Prostate gland (tissue), 2 donors: ENCODE measurements at regions of chr12 and their contacts with region 1.

Region 1: DNA sequence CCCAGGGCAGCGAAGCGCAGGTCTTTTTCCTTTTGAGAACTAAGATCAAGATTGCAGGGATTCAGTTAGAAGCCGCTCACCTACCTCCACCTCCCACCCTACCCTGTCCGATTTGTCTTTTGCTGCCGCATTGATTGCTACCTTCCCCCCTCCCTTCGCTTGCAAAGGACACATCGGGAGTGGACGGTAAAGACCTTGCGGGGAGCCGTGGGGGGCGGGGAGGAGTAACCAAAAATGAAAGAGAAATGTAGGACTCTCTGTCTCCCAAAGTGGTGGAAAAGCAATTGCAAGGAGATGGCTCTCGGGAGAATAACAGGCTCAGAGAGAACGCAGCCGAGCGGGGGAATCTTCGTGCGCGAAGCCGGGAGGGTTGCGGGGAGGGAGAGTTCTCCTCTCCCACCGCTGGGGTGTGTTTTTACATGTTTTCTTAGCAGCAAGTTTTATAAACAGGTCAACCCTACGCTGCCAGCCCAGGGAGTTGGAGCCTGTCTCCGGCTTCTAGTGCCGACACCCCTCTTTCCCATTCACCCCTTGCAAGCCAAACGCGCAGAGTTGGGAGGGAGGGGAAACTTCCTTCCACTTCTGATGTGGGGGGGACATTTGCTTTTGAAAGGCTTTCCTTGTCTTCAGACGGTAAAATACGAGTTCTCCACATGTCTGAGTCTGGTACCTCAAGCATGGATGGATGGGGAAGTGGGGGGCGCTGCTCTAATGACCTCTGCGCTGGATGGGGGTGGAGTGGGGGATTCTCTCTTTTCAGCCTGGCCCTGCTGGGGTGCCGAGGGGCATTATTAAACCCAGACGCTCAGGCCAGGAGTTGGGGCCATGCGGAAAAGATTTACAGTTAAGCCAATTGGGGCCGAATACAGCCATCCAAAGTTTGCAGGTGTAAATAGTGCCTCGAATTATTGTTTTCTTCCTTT is 8.8 kb upstream of the TBX3 start:
- DNase-seq: peak; percentile 80
- H3K4me3 ChIP-seq: peak overlapping the region; percentile 45 to 47
- H3K27ac ChIP-seq: peak overlapping the region; percentile 88 to 98
- H3K4me1 ChIP-seq: peaks cover 20% of the 10 kb centered on the region
- H3K27me3 ChIP-seq: no peaks in the 10 kb centered on the region
- CTCF ChIP-seq: peak in 1 of 4 experiments; percentile 64
- POLR2A ChIP-seq: peak; percentile 47

Region 2: DNA sequence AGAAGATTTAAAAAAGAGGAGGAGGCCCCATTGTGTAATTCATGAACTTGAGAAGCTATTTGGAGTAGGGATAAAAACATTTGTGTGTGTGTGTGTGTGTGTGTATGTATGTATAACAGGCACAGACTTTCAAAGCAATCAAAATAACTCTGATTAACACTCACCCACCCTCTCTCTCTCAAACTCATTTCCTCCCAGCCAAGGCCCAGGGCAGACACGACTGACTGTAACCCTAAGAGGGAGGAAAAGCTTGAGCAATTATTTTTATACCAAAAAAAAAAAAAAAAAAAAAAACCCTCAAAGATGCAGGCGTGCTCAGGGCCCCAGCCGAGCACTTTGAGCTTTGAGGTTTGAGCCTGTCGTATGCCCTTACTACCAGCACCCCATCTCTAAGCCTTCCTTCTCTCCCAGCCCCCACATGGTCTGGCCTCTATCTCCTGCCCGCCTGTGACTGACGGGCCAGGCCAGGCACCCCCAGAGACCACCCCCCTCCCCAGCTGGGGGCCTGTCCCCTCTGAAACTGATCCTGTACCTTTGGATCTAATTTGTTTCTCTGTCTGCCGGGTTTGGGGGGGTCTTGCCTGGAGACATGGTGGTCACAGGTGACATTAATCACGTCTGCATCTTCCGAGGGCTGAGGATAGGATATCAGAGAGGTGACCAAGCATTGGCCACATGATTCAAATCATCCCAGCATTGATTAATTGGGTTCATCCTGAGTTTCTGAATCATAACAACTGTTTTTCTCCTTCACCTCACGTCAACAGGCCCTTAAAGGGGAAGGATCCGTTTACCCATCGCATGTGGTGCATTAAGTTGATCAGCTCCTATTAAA is 54.1 kb after region 1 on chr12:
- intact Hi-C with region 1: loop called (anchors 2 kb)
- DNase-seq: no peak
- H3K4me3 ChIP-seq: no peak overlapping the region
- H3K27ac ChIP-seq: peak overlapping the region; percentile 43 to 66
- H3K4me1 ChIP-seq: no peaks in the 10 kb centered on the region
- H3K27me3 ChIP-seq: no peaks in the 10 kb centered on the region
- CTCF ChIP-seq: no peak
- POLR2A ChIP-seq: no peak

Region 3: GRCh38 chr12:115313929-115314328 is 621.1 kb after region 1 on chr12:
- intact Hi-C with region 1: loop called (anchors 10 kb)
- DNase-seq: peak; percentile 10
- H3K4me3 ChIP-seq: no peak overlapping the region
- H3K27ac ChIP-seq: no peak overlapping the region
- H3K4me1 ChIP-seq: no peaks in the 10 kb centered on the region
- H3K27me3 ChIP-seq: no peaks in the 10 kb centered on the region
- CTCF ChIP-seq: no peak
- POLR2A ChIP-seq: no peak